Activated CD4-positive, alpha-beta T cell treated with anti-CD3 and anti-CD28 coated beads for 36 hours (primary cell): ENCODE measurements at regions of chr4 and their contacts with region 1.

Region 1: GRCh38 chr4:15001869-15002658 is at the start of gene CPEB2:
- DNase-seq: peak; percentile 95
- ATAC-seq: peak; percentile 72
- H3K4me3 Mint-ChIP-seq: peak within 1 kb of the TSS; percentile 87
- H3K27ac Mint-ChIP-seq: peak within 1 kb of the TSS; percentile 96
- H3K4me1 Mint-ChIP-seq: peaks cover 14% of the 10 kb centered on the region
- H3K27me3 Mint-ChIP-seq: no peaks in the 10 kb centered on the region
- total RNA-seq, gene CPEB2: 6.7 TPM

Region 2: DNA sequence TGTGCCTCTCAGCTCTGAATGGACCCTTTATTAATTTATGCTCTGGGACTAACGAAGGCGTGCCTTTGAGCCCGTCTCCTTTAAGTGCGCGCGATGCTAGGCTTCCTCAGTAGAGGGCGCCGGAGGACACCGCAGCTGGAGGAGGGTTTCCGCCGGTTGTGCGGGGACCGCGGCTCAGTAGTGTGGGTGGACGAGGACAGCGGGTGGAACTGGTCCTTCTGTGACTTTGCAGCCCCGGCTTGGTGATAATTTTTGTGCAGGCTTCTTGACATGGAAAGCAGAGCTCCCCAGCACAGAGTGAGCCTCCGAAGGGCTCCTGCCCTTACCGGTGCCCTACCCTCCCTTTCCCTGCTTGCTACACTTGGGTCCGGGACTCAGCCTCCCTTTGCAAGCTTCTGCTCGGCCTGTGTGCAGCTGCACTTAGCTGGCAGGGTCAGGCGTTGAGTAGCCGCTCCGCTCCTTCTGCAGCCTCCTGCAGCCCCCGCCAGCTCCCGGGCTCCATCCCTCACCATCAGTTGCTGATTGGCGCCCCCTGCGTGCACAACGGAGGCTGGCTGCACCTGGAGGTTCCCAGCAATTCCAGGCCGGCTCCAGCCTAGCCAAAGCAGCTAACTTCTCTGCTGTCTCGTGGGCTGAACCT is 1347.8 kb before region 1 on chr4:
- CTCF ChIA-PET with region 1: interaction called, 3 read pairs
- POLR2A ChIA-PET with region 1: no interaction called
- intact Hi-C with region 1: loop called (anchors 1 to 10 kb)
- DNase-seq: peak; percentile 90
- ATAC-seq: peak; percentile 91
- H3K4me3 Mint-ChIP-seq: peak overlapping the region; percentile 66
- H3K27ac Mint-ChIP-seq: no peak overlapping the region
- H3K4me1 Mint-ChIP-seq: peaks cover 12% of the 10 kb centered on the region
- H3K27me3 Mint-ChIP-seq: peaks cover 13% of the 10 kb centered on the region

Region 3: DNA sequence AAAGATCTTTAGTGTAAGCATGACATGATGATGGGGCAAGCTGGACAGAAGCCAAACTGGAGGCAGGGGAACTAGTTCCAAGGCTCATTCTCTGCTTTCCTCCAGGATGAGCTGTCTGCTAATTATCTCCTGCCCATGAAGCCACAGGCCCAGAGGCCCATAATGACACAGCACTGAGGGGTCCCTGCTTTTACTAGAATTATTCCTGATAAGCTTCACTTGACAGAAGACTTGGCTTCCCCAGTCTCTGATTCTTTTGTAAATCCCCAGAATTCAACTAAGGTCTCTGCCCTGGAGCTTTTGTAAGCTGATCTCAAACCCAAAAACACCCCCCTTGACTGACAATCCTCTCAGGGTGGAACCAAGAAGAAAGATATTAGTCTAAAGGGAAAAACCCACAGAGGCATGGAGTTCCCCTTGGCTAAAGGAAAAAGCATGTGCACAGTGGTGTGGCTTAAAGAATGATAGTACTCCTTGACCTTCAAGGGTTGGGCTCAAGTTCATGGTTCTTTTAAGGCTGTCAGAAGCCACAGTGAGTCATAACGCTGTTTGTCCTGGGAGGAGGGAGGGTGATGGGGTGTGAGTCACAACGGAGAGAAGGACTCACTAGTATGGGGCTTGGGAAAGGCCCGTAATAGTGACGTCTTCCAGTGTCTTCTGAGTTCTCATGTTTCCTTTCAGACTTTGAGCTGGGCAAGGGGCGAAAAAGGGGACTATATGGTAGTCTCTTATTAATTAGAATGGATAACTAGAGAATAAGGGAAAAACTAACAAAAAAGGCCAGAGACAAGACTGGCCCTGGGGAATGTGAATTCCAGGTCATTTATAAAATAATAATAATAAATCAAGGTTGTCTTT is 145.8 kb before region 1 on chr4:
- CTCF ChIA-PET with region 1: no interaction called
- POLR2A ChIA-PET with region 1: no interaction called
- intact Hi-C with region 1: loop called (anchors 1 to 2 kb)
- DNase-seq: peak; percentile 86
- ATAC-seq: peak; percentile 94
- H3K4me3 Mint-ChIP-seq: peak overlapping the region; percentile 3
- H3K27ac Mint-ChIP-seq: peak overlapping the region; percentile 89
- H3K4me1 Mint-ChIP-seq: peaks cover 28% of the 10 kb centered on the region
- H3K27me3 Mint-ChIP-seq: peaks cover 19% of the 10 kb centered on the region

Region 4: GRCh38 chr4:15034071-15034764 is 32.2 kb after region 1 on chr4:
- CTCF ChIA-PET with region 1: no interaction called
- POLR2A ChIA-PET with region 1: no interaction called
- intact Hi-C with region 1: loop called in 1 of 2 experiments (anchors 2 kb)
- DNase-seq: no peak
- ATAC-seq: peak; percentile 22
- H3K4me3 Mint-ChIP-seq: no peak overlapping the region
- H3K27ac Mint-ChIP-seq: no peak overlapping the region
- H3K4me1 Mint-ChIP-seq: peaks cover 20% of the 10 kb centered on the region
- H3K27me3 Mint-ChIP-seq: no peaks in the 10 kb centered on the region

Region 5: GRCh38 chr4:15396157-15396800 is 394.2 kb after region 1 on chr4:
- CTCF ChIA-PET with region 1: interaction called, 3 read pairs
- POLR2A ChIA-PET with region 1: no interaction called
- intact Hi-C with region 1: loop called in 1 of 2 experiments (anchors 2 kb)
- DNase-seq: peak; percentile 79
- ATAC-seq: peak; percentile 84
- H3K4me3 Mint-ChIP-seq: no peak overlapping the region
- H3K27ac Mint-ChIP-seq: no peak overlapping the region
- H3K4me1 Mint-ChIP-seq: peaks cover 26% of the 10 kb centered on the region
- H3K27me3 Mint-ChIP-seq: no peaks in the 10 kb centered on the region

Region 6: GRCh38 chr4:15756361-15756861 is 754.3 kb after region 1 on chr4:
- CTCF ChIA-PET with region 1: no interaction called
- POLR2A ChIA-PET with region 1: no interaction called
- intact Hi-C with region 1: loop called (anchors 5 to 10 kb)
- DNase-seq: peak; percentile 87
- ATAC-seq: peak; percentile 82
- H3K4me3 Mint-ChIP-seq: peak overlapping the region; percentile 60
- H3K27ac Mint-ChIP-seq: peak overlapping the region; percentile 96
- H3K4me1 Mint-ChIP-seq: peaks cover 45% of the 10 kb centered on the region
- H3K27me3 Mint-ChIP-seq: no peaks in the 10 kb centered on the region